Activated B cell treated with CpG ODN at 0.5 μM for 24 hours (primary cell): ENCODE measurements at regions of chr1 and their contacts with region 1.

Region 1: DNA sequence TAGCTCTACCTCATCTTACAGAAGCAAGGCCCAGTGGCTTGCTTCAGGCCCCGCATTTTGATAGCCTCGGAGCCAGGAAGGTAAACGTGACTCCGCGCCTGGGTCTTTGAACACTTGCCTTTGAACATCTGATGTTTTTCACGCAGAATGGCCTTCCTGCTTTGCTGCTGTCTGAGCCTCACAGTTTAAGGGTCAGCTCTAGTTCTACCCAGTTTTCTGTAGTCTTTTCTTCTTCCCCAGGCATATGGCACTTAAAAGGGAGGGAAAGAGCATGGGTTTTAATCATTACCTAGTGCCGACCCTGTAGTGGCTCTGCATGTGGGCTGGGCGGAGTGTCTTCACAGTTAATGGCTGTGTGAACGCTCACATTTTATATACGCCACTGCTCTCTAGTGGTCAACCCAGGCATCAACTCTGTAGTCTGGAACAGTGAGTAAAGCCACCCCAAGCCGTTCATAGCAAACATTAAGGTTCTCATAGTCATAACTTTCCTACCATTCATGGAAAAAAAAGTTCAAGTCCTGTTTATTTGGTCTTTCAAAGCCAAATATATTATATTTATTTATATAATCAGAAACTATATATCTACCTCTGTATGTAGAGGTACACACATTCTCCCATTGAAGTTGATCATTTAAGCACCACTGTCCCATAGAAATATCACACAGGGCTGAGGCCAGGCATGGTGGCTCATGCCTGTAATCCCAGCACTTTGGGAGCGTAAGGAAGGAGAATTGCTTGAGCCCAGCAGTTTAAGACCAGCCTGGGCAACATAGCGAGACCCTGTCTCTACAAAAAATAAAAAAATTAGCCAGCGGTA is 78.1 kb downstream of the IER5 start:
- DNase-seq: peak; percentile 29
- ATAC-seq: peak; percentile 100
- H3K4me3 Mint-ChIP-seq: no peak overlapping the region
- H3K27ac Mint-ChIP-seq: no peak overlapping the region
- H3K4me1 Mint-ChIP-seq: peaks cover 3% of the 10 kb centered on the region
- H3K27me3 Mint-ChIP-seq: peaks cover 2% of the 10 kb centered on the region
- CTCF ChIP-seq: peak; percentile 74

Region 2: GRCh38 chr1:180515864-180516388 is 650.7 kb before region 1 on chr1:
- CTCF ChIA-PET with region 1: interaction called, 12 read pairs
- POLR2A ChIA-PET with region 1: no interaction called
- intact Hi-C with region 1: loop called (anchors 1 kb)
- DNase-seq: no peak
- ATAC-seq: peak; percentile 89
- H3K4me3 Mint-ChIP-seq: no peak overlapping the region
- H3K27ac Mint-ChIP-seq: no peak overlapping the region
- H3K4me1 Mint-ChIP-seq: no peaks in the 10 kb centered on the region
- H3K27me3 Mint-ChIP-seq: peaks cover 8% of the 10 kb centered on the region
- CTCF ChIP-seq: no peak

Region 3: GRCh38 chr1:180734366-180734765 is 432.2 kb before region 1 on chr1:
- CTCF ChIA-PET with region 1: no interaction called
- POLR2A ChIA-PET with region 1: no interaction called
- intact Hi-C with region 1: no loop called
- DNase-seq: no peak
- ATAC-seq: no peak
- H3K4me3 Mint-ChIP-seq: no peak overlapping the region
- H3K27ac Mint-ChIP-seq: no peak overlapping the region
- H3K4me1 Mint-ChIP-seq: no peaks in the 10 kb centered on the region
- H3K27me3 Mint-ChIP-seq: no peaks in the 10 kb centered on the region
- CTCF ChIP-seq: no peak

Region 4: DNA sequence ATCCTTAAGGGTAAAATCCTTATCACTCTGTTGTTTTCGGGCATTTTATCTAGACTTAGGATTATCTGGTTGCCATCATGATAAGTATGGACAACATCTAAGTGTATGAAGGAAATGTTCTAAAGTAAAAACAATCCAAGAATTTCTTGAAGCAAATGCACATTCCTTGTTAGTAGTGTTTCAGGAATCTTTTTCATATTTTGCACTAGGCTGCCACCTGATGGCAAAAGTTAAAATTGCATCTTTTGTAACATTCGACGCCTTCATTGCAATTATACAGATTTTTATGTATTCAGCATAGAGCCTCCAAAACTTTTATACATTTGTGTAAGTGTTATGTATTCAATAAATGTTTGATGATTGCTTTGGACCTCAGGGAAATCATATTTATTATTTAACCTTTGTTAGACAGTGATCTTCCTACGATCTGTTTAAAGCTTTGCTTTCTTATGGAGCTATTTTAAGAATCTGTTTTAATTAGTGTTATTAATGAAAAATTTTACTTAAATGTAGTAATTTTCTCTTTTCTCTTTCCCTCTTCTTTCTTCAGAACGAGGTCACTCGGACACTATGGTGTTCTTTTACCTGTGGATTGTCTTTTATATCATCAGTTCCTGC is 303.3 kb before region 1 on chr1:
- CTCF ChIA-PET with region 1: interaction called, 10 read pairs
- POLR2A ChIA-PET with region 1: no interaction called
- intact Hi-C with region 1: loop called (anchors 5 kb)
- DNase-seq: no peak
- ATAC-seq: no peak
- H3K4me3 Mint-ChIP-seq: no peak overlapping the region
- H3K27ac Mint-ChIP-seq: no peak overlapping the region
- H3K4me1 Mint-ChIP-seq: no peaks in the 10 kb centered on the region
- H3K27me3 Mint-ChIP-seq: no peaks in the 10 kb centered on the region
- CTCF ChIP-seq: peak; percentile 92

Region 5: DNA sequence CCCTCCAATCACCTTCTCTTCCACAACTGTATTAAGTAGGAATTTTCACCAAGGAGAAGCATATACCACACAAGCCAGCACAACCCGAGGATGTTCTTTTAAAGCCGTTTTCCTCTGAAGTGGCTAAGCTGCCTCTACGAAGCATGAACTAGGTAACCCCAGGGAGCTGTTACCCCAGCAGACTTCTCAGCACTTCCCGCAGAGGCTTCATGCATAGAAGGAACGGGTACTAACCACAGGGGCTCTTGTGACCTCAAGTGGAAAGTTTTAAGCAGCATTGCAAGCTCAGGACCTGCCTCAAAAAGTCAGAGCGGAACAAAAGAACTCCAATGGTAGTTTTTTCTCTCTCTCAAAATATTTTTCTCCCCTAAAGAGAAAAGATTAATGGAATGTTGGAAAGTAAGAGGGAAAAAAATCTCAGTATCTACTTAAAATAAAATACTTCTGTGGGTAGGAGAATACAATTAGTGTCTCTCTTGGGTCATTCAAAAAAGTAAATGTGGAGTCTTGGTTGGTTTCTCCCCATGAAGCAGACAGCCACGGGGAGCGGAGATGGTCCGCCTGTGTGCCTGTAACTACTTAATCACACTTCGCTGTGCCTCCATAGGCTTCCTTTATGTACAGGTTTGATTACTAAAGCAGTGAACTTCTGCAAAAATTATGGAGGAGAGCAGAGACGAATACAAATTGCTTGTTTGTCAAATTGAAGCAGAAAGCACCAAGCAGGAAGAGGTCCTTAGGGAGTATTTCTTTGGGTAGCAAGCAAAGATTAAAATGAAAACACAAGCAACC is 184.8 kb before region 1 on chr1:
- CTCF ChIA-PET with region 1: no interaction called
- POLR2A ChIA-PET with region 1: no interaction called
- intact Hi-C with region 1: loop called (anchors 2 kb)
- DNase-seq: no peak
- ATAC-seq: peak; percentile 93
- H3K4me3 Mint-ChIP-seq: no peak overlapping the region
- H3K27ac Mint-ChIP-seq: peak overlapping the region; percentile 64
- H3K4me1 Mint-ChIP-seq: peaks cover 15% of the 10 kb centered on the region
- H3K27me3 Mint-ChIP-seq: no peaks in the 10 kb centered on the region
- CTCF ChIP-seq: no peak

Region 6: DNA sequence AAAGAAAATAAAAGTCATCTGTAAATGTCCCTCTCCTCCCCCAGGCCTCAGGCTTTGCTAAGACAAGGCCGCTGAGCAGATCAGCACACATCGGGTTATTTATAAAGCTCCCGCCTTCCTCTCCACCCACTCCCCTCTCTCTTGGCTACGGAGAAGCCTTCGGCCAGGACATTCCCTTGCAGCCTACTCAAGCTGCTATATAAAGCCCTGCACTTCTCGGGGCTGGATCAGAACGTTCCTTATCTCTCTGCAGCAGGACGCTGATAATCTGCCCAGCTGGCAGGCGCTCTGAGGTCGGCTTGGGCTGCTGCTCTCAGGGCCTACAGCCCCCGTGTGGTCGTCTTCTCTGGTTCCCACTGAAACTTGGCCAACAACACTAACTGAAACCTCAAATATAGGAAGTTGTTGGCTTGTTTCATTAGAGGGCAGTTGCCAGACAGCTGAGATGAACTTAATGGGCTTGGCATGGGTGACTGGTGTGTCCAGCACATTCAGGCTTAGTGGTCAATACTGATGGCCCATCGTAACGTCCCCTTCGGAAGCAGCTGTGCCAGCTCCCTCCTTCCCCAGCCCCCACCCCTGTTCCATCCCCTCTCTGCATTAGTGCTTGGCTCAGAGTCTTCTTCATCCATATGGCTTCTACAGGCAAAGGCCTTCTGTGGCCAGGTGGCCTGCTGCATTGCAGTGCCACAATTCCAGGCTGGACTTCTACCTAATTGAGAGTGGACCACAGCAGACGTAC is 13.5 kb before region 1 on chr1:
- CTCF ChIA-PET with region 1: interaction called, 9 read pairs
- POLR2A ChIA-PET with region 1: no interaction called
- intact Hi-C with region 1: loop called (anchors 1 kb)
- DNase-seq: peak; percentile 48
- ATAC-seq: peak; percentile 86
- H3K4me3 Mint-ChIP-seq: peak overlapping the region; percentile 71
- H3K27ac Mint-ChIP-seq: peak overlapping the region; percentile 64
- H3K4me1 Mint-ChIP-seq: peaks cover 48% of the 10 kb centered on the region
- H3K27me3 Mint-ChIP-seq: no peaks in the 10 kb centered on the region
- CTCF ChIP-seq: no peak

Region 7: DNA sequence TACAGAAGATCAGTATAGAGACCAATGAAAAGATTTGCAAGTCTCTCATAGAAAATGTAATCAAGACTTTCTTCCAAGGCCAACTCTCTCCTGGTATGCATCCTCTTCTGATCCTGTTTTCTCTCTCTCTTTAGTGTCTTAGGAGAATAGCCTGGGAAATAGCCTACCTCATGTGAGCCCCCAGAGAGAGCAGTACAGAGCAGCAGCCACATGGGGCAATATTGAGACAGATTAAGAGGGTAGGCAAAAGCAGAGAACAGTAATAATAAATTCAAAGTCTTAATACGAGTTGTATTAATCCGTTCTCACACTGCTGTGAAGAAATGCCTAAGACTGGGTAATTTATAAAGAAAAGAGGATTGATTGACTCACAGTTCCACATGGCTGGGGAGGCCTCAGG is 1361.1 kb after region 1 on chr1:
- CTCF ChIA-PET with region 1: no interaction called
- POLR2A ChIA-PET with region 1: no interaction called
- intact Hi-C with region 1: no loop called
- DNase-seq: no peak
- ATAC-seq: no peak
- H3K4me3 Mint-ChIP-seq: no peak overlapping the region
- H3K27ac Mint-ChIP-seq: no peak overlapping the region
- H3K4me1 Mint-ChIP-seq: no peaks in the 10 kb centered on the region
- H3K27me3 Mint-ChIP-seq: peaks cover 2% of the 10 kb centered on the region
- CTCF ChIP-seq: no peak